Posterior vena cava (tissue), 2 donors: ENCODE measurements at regions of chr13 and their contacts with region 1.

Region 1: DNA sequence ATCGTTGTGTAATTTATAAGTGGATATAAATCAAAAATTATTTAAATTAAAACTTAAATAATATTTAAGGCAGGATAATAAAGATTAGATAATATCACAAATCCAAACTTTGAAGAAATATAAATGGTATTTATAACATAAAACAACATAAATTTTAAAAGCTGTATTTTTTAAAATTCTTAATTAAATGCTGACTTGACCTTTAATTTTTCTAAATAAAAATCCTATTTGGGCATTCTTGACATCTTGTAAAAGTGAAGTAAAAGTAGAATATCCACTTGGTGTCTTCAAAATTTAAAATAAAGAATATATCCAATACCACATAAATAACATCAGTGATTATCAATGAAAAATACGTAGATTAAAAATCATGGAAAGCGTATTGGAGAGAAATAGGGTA is 87.7 kb downstream of the TNFSF13B start:
- DNase-seq: no peak

Region 2: DNA sequence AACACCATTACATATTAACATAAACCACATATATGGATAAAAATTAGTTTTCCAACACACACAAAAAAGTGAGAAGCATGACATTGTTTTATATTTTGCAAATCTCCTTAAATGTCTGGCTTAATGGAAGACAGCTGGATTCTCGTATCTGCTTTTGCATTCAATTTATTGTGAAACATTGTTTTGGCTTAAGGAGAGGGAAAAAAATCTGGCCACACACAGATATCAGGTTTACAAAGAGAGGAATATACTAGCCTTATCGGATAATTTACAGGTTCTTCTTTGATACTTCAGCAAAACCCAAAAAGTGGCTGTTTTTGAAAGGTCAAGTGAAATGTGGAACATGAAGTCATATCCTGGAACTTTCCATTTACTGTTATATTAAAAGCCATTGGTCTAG is 1265.8 kb before region 1 on chr13:
- intact Hi-C with region 1: no loop called
- DNase-seq: no peak

Region 3: DNA sequence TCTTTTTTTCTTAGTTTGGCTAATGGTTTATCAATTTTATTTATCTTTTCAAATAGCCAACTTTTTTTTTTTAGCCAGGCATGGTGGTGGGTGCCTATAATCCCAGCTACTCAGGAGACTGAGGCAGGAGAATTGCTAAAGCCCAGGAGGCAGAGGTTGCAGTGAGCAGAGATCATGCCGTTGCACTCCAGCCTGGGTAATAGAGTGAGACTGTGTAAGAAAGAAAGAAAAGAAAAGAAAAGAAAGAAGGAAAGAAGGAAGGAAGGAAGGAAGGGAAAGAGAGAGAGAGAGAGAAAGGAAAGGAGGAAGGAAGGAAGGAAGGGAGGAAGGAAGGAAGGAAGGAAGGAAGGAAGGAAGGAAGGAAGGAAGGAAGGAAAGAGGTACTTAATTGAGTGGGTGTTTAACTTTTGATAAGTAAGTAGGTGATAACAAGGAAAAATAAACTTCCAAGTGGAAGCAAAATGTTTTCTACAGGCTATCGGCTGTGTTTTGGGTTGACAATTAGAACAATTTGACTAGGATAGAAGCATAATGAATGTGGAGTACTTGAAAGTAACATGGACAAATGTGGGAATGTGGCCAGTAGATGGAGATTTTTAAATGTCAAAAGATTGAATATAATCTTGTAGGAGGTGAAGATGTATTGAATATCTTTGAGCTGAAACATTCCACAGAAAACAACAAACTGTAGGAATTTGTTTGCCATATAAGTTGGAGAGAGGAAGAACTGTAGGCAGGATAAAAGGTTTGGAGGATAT is 209.4 kb after region 1 on chr13:
- intact Hi-C with region 1: loop called in 1 of 2 experiments (anchors 5 kb)
- DNase-seq: no peak